Caco-2 (cell line): ENCODE measurements at regions of chr9 and their contacts with region 1.

Region 1: GRCh38 chr9:101229606-101230005 is 155.2 kb downstream of the BAAT start:
- DNase-seq: no peak
- H3K4me3 ChIP-seq: no peak overlapping the region
- H3K4me3 Mint-ChIP-seq: no peak overlapping the region
- H3K27ac Mint-ChIP-seq: no peak overlapping the region
- H3K4me1 ChIP-seq: no peaks in the 10 kb centered on the region
- H3K4me1 Mint-ChIP-seq: no peaks in the 10 kb centered on the region
- H3K27me3 ChIP-seq: no peaks in the 10 kb centered on the region
- H3K27me3 Mint-ChIP-seq: peaks cover 9% of the 10 kb centered on the region
- CTCF ChIP-seq: no peak

Region 2: DNA sequence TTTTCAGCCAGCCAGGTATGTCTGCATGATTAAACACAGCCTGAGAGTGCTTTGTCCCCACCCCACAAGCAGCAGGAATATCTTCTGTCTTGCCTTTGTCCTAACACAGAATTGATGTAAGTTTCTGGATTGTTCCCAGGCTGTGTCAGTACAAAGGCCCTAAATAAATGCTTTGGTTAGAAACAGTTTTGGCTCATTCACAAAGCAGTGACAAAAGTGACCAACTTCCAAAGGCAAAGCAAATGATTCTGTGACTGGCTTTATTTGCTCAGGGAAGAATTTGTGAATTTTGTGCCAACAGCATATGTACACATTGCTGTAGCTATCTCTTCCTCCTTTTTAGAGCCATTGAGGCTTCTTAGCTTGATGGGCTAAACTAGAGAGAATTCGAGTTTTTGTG is 67.4 kb before region 1 on chr9:
- CTCF ChIA-PET with region 1: no interaction called
- POLR2A ChIA-PET with region 1: no interaction called
- intact Hi-C with region 1: no loop called
- DNase-seq: no peak
- H3K4me3 ChIP-seq: no peak overlapping the region
- H3K4me3 Mint-ChIP-seq: no peak overlapping the region
- H3K27ac Mint-ChIP-seq: no peak overlapping the region
- H3K4me1 ChIP-seq: no peaks in the 10 kb centered on the region
- H3K4me1 Mint-ChIP-seq: no peaks in the 10 kb centered on the region
- H3K27me3 ChIP-seq: no peaks in the 10 kb centered on the region; the same call in 1 of the 2 replicates
- H3K27me3 Mint-ChIP-seq: no peaks in the 10 kb centered on the region
- CTCF ChIP-seq: no peak

Region 3: GRCh38 chr9:101242651-101243050 is 13.0 kb after region 1 on chr9:
- CTCF ChIA-PET with region 1: no interaction called
- POLR2A ChIA-PET with region 1: no interaction called
- intact Hi-C with region 1: loop called (anchors 2 kb)
- DNase-seq: no peak
- H3K4me3 ChIP-seq: no peak overlapping the region
- H3K4me3 Mint-ChIP-seq: no peak overlapping the region
- H3K27ac Mint-ChIP-seq: no peak overlapping the region
- H3K4me1 ChIP-seq: no peaks in the 10 kb centered on the region
- H3K4me1 Mint-ChIP-seq: no peaks in the 10 kb centered on the region
- H3K27me3 ChIP-seq: no peaks in the 10 kb centered on the region
- H3K27me3 Mint-ChIP-seq: peaks cover 11% of the 10 kb centered on the region
- CTCF ChIP-seq: no peak

Region 4: GRCh38 chr9:101299901-101300300 is 70.3 kb after region 1 on chr9:
- CTCF ChIA-PET with region 1: no interaction called
- POLR2A ChIA-PET with region 1: no interaction called
- intact Hi-C with region 1: no loop called
- DNase-seq: no peak
- H3K4me3 ChIP-seq: no peak overlapping the region
- H3K4me3 Mint-ChIP-seq: no peak overlapping the region
- H3K27ac Mint-ChIP-seq: no peak overlapping the region
- H3K4me1 ChIP-seq: no peaks in the 10 kb centered on the region
- H3K4me1 Mint-ChIP-seq: no peaks in the 10 kb centered on the region
- H3K27me3 ChIP-seq: no peaks in the 10 kb centered on the region
- H3K27me3 Mint-ChIP-seq: peaks cover 5% of the 10 kb centered on the region
- CTCF ChIP-seq: no peak

Region 5: GRCh38 chr9:101427957-101428655 is 198.5 kb after region 1 on chr9:
- CTCF ChIA-PET with region 1: no interaction called
- POLR2A ChIA-PET with region 1: no interaction called
- intact Hi-C with region 1: no loop called
- DNase-seq: no peak
- H3K4me3 ChIP-seq: no peak overlapping the region
- H3K4me3 Mint-ChIP-seq: no peak overlapping the region
- H3K27ac Mint-ChIP-seq: no peak overlapping the region
- H3K4me1 ChIP-seq: peaks cover 5% of the 10 kb centered on the region
- H3K4me1 Mint-ChIP-seq: peaks cover under 1% of the 10 kb centered on the region
- H3K27me3 ChIP-seq: no peaks in the 10 kb centered on the region
- H3K27me3 Mint-ChIP-seq: no peaks in the 10 kb centered on the region
- CTCF ChIP-seq: no peak